Pancreas (tissue), 10 donors: ENCODE measurements at regions of chr16 and their contacts with region 1.

Region 1: GRCh38 chr16:21708533-21709115 is 44.9 kb downstream of the OTOA start:
- DNase-seq: peak in 5 of 6 donors; percentile 44 to 78 (median 67)
- ATAC-seq: peak in 3 of 4 donors; percentile 79 to 86 (median 80)
- H3K4me3 ChIP-seq: no peak overlapping the region
- H3K27ac ChIP-seq: no peak overlapping the region
- H3K4me1 ChIP-seq: no peaks in the 10 kb centered on the region
- H3K27me3 ChIP-seq: no peaks in the 10 kb centered on the region
- CTCF ChIP-seq: peak; percentile 53 to 90 (median 76)

Region 2: DNA sequence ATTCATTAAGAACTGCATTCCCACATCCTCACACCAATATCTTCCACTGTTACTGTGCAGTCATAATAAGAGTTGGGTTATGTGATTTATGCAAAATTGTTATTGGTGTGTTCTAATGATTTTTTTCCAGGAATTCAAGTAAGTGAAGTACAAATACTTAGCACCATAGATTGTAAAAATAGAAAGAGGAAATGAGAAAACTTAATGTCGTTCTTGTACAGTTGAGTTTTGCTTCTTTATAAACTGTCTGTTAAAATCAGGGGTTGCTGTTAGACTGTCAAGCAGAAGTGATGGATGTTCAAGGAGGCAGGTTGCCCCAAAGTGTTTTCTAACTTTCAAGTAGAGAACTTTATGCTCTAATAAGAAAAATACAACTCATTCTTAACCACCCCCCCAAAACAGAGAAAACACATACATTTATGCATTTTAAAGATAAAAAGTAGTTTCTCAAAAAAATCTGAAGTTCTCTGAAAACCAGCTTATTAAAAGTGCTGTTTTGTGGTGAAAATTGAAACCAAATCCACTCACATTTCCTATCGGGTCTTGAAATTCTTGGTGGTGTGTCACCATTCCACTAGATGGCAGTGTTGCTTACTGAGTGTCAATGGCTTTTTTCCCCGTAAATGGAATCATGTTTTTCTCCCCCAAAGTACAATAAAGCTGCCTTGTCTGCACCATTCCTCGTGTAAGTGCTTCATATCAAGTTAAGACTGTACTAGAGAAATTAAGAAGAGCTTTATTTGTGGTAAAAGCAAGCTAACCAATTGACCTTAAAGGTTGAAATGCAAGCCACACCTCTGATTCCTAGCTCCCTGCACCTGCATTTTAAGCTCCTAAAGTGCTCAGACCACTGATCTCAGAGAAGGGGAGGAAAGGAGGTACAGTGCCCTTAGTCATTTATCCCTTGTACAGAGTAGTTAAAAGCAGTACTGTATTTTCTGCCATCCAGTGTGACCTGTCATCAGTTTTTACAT is 51.5 kb before region 1 on chr16:
- intact Hi-C with region 1: loop called in 1 of 3 experiments (anchors 5 kb)
- DNase-seq: no peak
- ATAC-seq: peak in 3 of 4 donors; percentile 59 to 65 (median 61)
- H3K4me3 ChIP-seq: no peak overlapping the region
- H3K27ac ChIP-seq: no peak overlapping the region
- H3K4me1 ChIP-seq: peaks cover 0 to 12% (median 0%) of the 10 kb centered on the region in 3 donors
- H3K27me3 ChIP-seq: no peaks in the 10 kb centered on the region
- CTCF ChIP-seq: peak; percentile 68 to 85 (median 80)